ENCODE measurements at regions of chr9 and their contacts with region 1.

Region 1: DNA sequence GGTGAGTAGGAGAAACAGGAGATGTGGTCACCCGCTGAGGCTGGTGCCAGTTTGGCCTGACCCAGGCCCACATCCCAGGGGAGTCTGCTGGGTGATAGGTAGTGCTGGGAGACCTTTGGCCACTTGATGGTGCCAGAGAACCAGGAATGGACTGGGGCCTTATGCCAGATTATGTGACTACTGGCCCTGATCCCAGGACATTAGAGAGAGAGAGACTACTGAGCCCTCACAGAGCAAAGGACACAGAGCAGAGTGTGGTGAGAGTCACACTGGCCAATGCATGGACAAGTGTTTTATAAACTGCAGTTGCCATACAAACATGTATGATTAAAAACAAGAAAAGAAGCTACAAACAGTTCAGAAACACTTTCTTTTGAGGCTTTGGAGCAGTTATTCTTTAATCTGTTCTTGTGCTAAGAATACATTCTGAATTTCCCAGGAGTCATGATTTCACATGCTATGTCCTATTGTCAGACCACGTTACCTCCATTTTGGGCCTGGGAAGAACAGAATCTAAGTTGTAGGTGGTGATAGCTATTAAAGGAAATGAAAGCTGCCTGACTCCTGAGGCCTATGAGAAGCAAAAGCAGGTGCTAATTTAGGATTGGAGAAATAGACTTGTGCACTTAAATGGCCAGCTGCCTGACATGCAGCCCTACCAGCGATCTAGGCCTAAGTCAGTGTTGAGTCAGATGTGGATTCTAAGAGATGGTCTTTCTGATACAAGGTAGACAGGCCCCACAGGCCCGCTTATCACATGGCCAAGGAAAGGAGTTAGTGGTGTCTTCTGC is 32.6 kb upstream of the TMOD1 start:
- DNase-seq: peak; percentile 81

Region 2: GRCh38 chr9:97153967-97154366 is 314.9 kb before region 1 on chr9:
- CTCF ChIA-PET with region 1: no interaction called
- POLR2A ChIA-PET with region 1: no interaction called
- DNase-seq: no peak

Region 3: GRCh38 chr9:97398999-97399758 is 69.7 kb before region 1 on chr9:
- CTCF ChIA-PET with region 1: interaction called, 11 read pairs
- POLR2A ChIA-PET with region 1: no interaction called
- DNase-seq: peak; percentile 78

Region 4: GRCh38 chr9:97615439-97616072 is 146.7 kb after region 1 on chr9:
- CTCF ChIA-PET with region 1: interaction called, 39 read pairs
- POLR2A ChIA-PET with region 1: no interaction called
- DNase-seq: peak; percentile 66

Measured in HEK293T (cell line).